Panc1 (cell line): ENCODE measurements at regions of chr17 and their contacts with region 1.

Region 1: GRCh38 chr17:36907407-36907806 is 29.9 kb upstream of the LHX1 start:
- DNase-seq: no peak
- ATAC-seq: no peak
- H3K4me3 ChIP-seq: no peak overlapping the region
- H3K27ac ChIP-seq: no peak overlapping the region
- H3K4me1 ChIP-seq: no peaks in the 10 kb centered on the region
- H3K27me3 ChIP-seq: no peaks in the 10 kb centered on the region
- CTCF ChIP-seq: no peak

Region 2: GRCh38 chr17:36808181-36808661 is 99.2 kb before region 1 on chr17:
- CTCF ChIA-PET with region 1: no interaction called
- POLR2A ChIA-PET with region 1: no interaction called
- in situ Hi-C with region 1: no loop called
- intact Hi-C with region 1: no loop called
- DNase-seq: no peak
- ATAC-seq: peak; percentile 89
- H3K4me3 ChIP-seq: peak overlapping the region; percentile 30 to 44
- H3K27ac ChIP-seq: no peak overlapping the region
- H3K4me1 ChIP-seq: no peaks in the 10 kb centered on the region
- H3K27me3 ChIP-seq: no peaks in the 10 kb centered on the region
- CTCF ChIP-seq: no peak

Region 3: DNA sequence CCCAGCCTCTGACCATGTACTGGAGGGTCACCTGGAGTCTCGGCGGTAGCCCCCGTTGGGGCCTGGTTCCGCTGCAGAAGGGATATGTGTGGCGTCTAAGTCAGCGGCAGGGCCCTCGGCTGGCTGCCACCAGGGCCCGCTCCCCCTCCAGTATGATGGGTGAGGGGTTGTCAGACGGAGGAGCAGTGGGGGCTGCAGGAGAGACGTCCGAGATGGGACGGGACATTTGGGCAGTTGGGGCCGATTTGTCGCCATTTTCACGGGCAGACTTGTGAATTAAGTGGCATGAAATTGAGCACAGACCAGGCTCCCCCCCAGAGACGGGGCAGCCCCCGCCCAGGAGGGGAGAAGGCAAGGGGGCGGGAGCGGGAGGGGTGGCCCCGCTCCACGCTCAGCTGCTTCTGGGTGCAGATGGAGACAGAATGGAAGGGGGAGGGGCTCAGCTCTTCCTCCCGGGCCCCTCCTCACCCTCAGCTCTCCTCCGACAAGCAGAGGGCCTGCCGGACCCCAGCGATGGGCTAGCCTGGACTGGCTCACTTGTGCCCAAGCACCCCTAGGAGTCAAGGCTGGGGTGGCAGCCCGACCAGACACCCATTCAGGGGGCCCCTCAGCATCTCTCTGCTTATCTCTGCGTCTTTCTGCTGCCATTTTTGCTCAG is 22.8 kb before region 1 on chr17:
- CTCF ChIA-PET with region 1: no interaction called
- POLR2A ChIA-PET with region 1: no interaction called
- in situ Hi-C with region 1: no loop called
- intact Hi-C with region 1: no loop called
- DNase-seq: no peak
- ATAC-seq: no peak
- H3K4me3 ChIP-seq: no peak overlapping the region
- H3K27ac ChIP-seq: no peak overlapping the region
- H3K4me1 ChIP-seq: no peaks in the 10 kb centered on the region
- H3K27me3 ChIP-seq: no peaks in the 10 kb centered on the region
- CTCF ChIP-seq: no peak

Region 4: DNA sequence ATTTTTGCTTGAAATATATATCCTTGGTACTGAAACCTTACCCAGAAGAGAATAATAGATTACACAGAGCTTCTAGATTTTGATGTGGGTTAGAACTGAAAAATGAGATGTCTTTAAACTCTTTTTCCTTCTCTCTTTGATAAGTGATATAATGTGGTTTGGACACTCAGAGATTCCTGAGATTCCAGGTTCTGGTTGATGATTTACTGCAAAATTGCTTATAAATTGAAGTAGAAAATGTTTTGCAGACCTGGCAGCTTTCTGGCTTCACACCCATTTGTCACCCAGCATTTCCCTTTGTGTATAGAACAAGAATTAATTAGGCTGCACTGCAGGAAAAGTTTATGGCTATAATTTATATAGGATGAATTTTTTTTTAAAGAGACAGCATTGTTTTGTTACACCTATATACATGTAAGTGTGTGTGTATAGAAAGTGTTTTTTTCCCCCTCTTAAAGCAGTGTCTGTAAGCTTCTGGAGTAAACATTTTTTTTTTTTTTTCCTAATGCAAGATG is 64.8 kb after region 1 on chr17:
- CTCF ChIA-PET with region 1: no interaction called
- POLR2A ChIA-PET with region 1: interaction called, 16 read pairs
- in situ Hi-C with region 1: no loop called
- intact Hi-C with region 1: no loop called
- DNase-seq: no peak
- ATAC-seq: no peak
- H3K4me3 ChIP-seq: no peak overlapping the region
- H3K27ac ChIP-seq: no peak overlapping the region
- H3K4me1 ChIP-seq: peaks cover 12% of the 10 kb centered on the region
- H3K27me3 ChIP-seq: no peaks in the 10 kb centered on the region
- CTCF ChIP-seq: no peak

Region 5: GRCh38 chr17:36994438-36994837 is 87.0 kb after region 1 on chr17:
- CTCF ChIA-PET with region 1: no interaction called
- POLR2A ChIA-PET with region 1: no interaction called
- in situ Hi-C with region 1: no loop called
- intact Hi-C with region 1: no loop called
- DNase-seq: no peak
- ATAC-seq: no peak
- H3K4me3 ChIP-seq: no peak overlapping the region
- H3K27ac ChIP-seq: no peak overlapping the region
- H3K4me1 ChIP-seq: no peaks in the 10 kb centered on the region
- H3K27me3 ChIP-seq: no peaks in the 10 kb centered on the region
- CTCF ChIP-seq: no peak